IMR-90 (cell line): ENCODE measurements at regions of chr6 and their contacts with region 1.

Region 1: GRCh38 chr6:79233611-79234149 is 802 bp downstream of the HMGN3 start:
- DNase-seq: peak; percentile 82
- ATAC-seq: peak; percentile 85
- H3K4me3 ChIP-seq: peak overlapping the region; percentile 85
- H3K27ac ChIP-seq: peak overlapping the region; percentile 69
- H3K4me1 ChIP-seq: no peaks in the 10 kb centered on the region
- H3K27me3 ChIP-seq: no peaks in the 10 kb centered on the region
- CTCF ChIP-seq: peak; percentile 20; the same call in 1 of the 2 replicates
- POLR2A ChIP-seq: peak; percentile 41; the same call in 1 of the 2 replicates
- RAD21 ChIP-seq: no peak

Region 2: GRCh38 chr6:78867370-78868040 is 366.2 kb before region 1 on chr6 and contains the start of gene IRAK1BP1:
- CTCF ChIA-PET with region 1: no interaction called
- POLR2A ChIA-PET with region 1: no interaction called
- dilution Hi-C with region 1: no loop called
- in situ Hi-C with region 1: no loop called
- intact Hi-C with region 1: loop called (anchors 10 kb)
- DNase-seq: peak; percentile 75
- ATAC-seq: peak; percentile 100
- H3K4me3 ChIP-seq: peak within 1 kb of the TSS; percentile 90
- H3K27ac ChIP-seq: peak within 1 kb of the TSS; percentile 68
- H3K4me1 ChIP-seq: no peaks in the 10 kb centered on the region
- H3K27me3 ChIP-seq: no peaks in the 10 kb centered on the region
- CTCF ChIP-seq: no peak
- POLR2A ChIP-seq: no peak
- RAD21 ChIP-seq: no peak
- total RNA-seq, gene IRAK1BP1: 1.9 and 2.2 TPM in 2 replicates

Region 3: DNA sequence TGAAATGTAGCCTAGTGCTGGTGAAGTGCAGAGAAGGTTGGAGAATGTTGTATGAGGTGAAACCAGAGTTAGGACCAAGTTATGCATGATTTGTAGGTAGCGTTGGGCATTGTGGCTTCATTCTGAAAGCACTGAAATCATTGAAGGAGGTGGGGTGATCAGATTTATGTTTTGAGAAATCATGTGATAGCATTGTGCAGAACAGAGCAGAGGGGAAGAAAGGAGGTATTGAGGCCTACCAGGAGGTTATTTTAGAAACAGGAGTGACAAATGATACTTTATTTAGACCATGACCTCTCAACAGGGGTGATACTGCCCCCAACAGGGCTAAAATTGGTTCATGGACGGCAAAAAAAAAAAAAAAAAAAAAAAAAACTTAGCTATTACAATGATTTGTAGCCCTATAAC is 16.4 kb after region 1 on chr6:
- CTCF ChIA-PET with region 1: no interaction called
- POLR2A ChIA-PET with region 1: no interaction called
- dilution Hi-C with region 1: no loop called
- in situ Hi-C with region 1: no loop called
- intact Hi-C with region 1: loop called (anchors 1 kb)
- DNase-seq: no peak
- ATAC-seq: no peak
- H3K4me3 ChIP-seq: no peak overlapping the region
- H3K27ac ChIP-seq: no peak overlapping the region
- H3K4me1 ChIP-seq: no peaks in the 10 kb centered on the region
- H3K27me3 ChIP-seq: no peaks in the 10 kb centered on the region
- CTCF ChIP-seq: 0 out of 2 replicates have a peak, but pooled peaks have one; percentile 12
- POLR2A ChIP-seq: no peak
- RAD21 ChIP-seq: no peak

Region 4: DNA sequence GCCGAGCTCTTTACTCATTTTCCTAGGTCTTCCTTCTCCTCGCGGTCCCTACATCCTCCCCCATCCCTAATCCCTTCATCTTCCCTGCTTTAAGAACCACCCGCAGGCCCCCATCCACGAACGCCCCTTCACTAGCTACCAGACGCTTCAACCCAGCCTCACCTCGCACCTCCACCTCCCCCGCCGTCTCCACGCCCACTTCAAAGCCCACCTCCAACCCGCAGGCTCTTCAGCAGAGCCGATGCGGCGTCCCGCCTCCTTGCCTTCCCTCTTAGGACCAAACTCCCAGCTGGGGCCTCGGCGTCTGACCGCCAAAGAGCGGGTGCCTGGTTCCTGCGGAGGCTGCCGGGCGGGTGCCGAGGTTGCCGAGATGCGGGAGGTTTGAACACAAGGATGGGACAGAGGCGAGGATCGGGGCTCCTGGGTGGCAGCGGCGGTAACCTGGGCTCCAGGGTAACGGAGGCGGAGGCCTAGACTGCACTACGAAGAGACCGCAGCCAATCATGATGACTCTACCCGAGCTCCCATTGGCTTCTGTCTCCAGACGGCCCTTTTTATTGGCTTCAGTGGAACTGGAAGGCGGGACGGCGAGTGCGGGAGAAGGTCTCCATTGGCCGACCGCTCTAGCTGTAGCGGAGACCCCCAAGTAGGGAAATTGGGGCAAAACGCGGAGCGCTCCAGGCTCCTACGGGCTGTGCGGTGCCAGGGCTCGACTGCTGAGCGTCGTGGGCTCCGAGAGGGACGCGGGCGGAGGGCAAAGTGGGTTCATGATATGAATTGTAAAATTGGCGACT is 303.5 kb after region 1 on chr6 and contains the start of gene LCA5:
- CTCF ChIA-PET with region 1: no interaction called
- POLR2A ChIA-PET with region 1: no interaction called
- dilution Hi-C with region 1: no loop called
- in situ Hi-C with region 1: loop called (anchors 10 kb)
- intact Hi-C with region 1: loop called (anchors 1 kb)
- DNase-seq: peak; percentile 97
- ATAC-seq: peak; percentile 98
- H3K4me3 ChIP-seq: peak within 1 kb of the TSS; percentile 91
- H3K27ac ChIP-seq: peak within 1 kb of the TSS; percentile 90
- H3K4me1 ChIP-seq: no peaks in the 10 kb centered on the region
- H3K27me3 ChIP-seq: no peaks in the 10 kb centered on the region
- CTCF ChIP-seq: no peak
- POLR2A ChIP-seq: 0 out of 2 replicates have a peak, but pooled peaks have one; percentile 59
- RAD21 ChIP-seq: no peak
- total RNA-seq, gene LCA5: 2.0 and 3.3 TPM in 2 replicates

Region 5: GRCh38 chr6:79672631-79673111 is 439.0 kb after region 1 on chr6:
- CTCF ChIA-PET with region 1: no interaction called
- POLR2A ChIA-PET with region 1: no interaction called
- dilution Hi-C with region 1: no loop called
- in situ Hi-C with region 1: no loop called
- intact Hi-C with region 1: loop called (anchors 10 kb)
- DNase-seq: peak; percentile 45
- ATAC-seq: peak; percentile 61
- H3K4me3 ChIP-seq: no peak overlapping the region
- H3K27ac ChIP-seq: no peak overlapping the region
- H3K4me1 ChIP-seq: peaks cover 5% of the 10 kb centered on the region
- H3K27me3 ChIP-seq: no peaks in the 10 kb centered on the region
- CTCF ChIP-seq: peak; percentile 58
- POLR2A ChIP-seq: no peak
- RAD21 ChIP-seq: peak; percentile 73